ENCODE measurements at regions of chr15 and their contacts with region 1.

Region 1: DNA sequence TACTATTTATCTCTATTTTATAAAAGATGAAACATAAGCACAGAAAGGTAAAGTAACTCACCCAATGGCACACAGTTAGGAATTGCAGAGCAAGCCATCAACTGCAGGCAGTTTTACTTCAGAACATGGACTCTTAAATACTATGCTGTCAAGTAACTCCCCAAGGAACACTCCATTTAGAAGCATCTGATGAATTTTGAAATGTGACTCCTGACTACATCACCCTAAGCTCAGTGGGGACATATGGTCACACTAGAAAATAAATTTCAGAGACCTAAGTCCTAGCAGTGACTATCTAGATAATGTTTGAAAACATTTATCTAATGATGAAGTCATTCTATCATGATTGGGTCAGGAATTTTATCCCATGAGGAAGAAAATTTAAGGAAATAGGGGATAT is 272.8 kb upstream of the ARRDC4 start:
- DNase-seq: no peak
- H3K4me3 ChIP-seq: no peak overlapping the region
- H3K27ac ChIP-seq: no peak overlapping the region
- H3K4me1 ChIP-seq: no peaks in the 10 kb centered on the region
- H3K27me3 ChIP-seq: no peaks in the 10 kb centered on the region
- CTCF ChIP-seq: no peak
- POLR2A ChIP-seq: no peak

Region 2: DNA sequence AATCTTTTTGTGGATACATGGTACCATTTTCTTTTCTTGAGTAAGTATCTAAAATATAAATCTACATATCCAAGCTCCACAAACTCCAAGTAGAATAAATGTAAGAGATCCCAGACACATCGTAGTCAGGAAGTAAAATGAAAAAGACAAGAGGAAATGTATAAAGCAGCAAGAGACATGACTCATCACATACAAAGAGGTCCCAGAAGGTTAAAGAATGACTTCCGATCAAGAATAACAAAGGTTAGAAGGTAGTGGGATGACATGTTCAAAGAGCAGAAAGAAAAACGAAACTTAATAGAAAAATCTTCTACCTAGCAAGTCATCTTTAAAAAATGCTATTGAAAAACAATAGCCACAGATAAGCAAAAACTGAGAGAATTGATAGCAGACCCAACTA is 651.4 kb before region 1 on chr15:
- intact Hi-C with region 1: no loop called
- DNase-seq: no peak
- H3K4me3 ChIP-seq: no peak overlapping the region
- H3K27ac ChIP-seq: no peak overlapping the region
- H3K4me1 ChIP-seq: no peaks in the 10 kb centered on the region
- H3K27me3 ChIP-seq: no peaks in the 10 kb centered on the region
- CTCF ChIP-seq: no peak
- POLR2A ChIP-seq: no peak

Region 3: DNA sequence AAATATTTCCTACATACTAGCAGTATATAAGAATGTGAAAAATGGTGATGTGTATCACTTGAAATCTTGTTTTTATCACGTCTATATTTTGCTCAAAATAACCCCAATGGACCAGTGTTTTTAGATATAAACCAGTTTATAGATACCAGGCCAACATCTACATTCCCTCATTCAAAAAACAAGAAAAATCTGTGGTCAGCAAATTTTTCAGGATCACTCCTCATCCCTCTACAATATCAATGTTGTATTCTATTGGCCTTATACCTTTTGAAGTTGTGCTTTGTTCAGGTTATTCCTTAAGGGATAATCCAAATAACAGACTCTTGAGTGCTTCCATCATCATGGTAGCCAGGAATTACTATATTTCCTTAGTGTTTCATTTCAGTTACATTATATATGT is 60.0 kb before region 1 on chr15:
- intact Hi-C with region 1: loop called (anchors 2 kb)
- DNase-seq: no peak
- H3K4me3 ChIP-seq: no peak overlapping the region
- H3K27ac ChIP-seq: no peak overlapping the region
- H3K4me1 ChIP-seq: no peaks in the 10 kb centered on the region
- H3K27me3 ChIP-seq: no peaks in the 10 kb centered on the region
- CTCF ChIP-seq: no peak
- POLR2A ChIP-seq: no peak

Region 4: GRCh38 chr15:97672586-97672985 is 15.1 kb before region 1 on chr15:
- intact Hi-C with region 1: no loop called
- DNase-seq: no peak
- H3K4me3 ChIP-seq: no peak overlapping the region
- H3K27ac ChIP-seq: no peak overlapping the region
- H3K4me1 ChIP-seq: no peaks in the 10 kb centered on the region
- H3K27me3 ChIP-seq: no peaks in the 10 kb centered on the region
- CTCF ChIP-seq: no peak
- POLR2A ChIP-seq: no peak

Measured in breast epithelium (tissue), 4 donors.